ENCODE measurements at regions of chr7 and their contacts with region 1.

Region 1: GRCh38 chr7:117127585-117128168 is 174.4 kb downstream of the ST7 start:
- DNase-seq: no peak
- H3K4me3 ChIP-seq: no peak overlapping the region
- CTCF ChIP-seq: peak; percentile 52

Region 2: DNA sequence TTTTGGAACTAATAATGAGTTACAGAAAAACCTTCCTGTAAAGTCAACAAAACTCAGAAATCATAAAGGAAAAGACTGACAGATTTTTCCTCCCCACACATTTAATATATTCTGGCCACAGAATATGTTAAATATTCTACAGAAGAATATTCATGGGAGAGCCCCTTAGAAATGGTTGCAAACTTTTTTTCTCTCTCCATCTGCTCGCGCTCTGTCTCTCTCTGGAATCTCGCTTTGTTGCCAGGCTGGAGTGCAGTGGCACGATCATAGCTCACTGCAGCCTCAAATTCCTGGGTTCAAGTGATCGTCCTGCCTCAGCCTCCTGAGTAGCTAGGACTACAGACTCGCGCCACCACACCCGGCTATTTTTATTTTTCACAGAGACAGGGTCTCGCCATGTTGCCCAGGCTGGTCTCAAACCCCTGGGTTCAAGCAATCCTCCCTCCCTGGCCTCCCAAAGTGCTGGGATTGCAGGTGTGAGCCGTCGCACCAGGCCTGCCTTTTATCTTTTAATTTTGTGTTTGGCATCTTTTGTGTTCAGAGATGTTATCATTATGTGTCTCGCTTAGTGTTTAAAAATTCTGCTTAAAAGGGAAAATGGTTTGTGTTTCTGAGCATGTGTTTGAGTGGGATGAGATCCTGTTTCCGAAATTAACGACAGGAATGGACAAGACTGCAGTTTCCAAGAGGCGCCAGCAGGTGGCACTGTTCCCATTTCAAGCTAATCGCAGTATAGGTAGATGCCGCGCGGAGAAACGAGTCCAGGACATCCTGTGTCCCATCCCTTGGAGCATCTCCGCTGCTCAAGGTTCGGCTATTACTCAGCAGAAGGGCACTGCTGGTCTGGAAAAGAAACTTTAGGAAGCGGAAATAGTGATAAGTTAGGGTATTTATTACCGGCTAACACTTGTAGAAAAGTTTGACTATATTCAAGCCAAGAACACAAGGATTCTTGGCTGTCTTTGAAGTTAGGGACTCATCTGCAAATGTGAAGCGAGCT is 197.5 kb before region 1 on chr7:
- CTCF ChIA-PET with region 1: interaction called, 255 read pairs
- POLR2A ChIA-PET with region 1: no interaction called
- DNase-seq: no peak
- H3K4me3 ChIP-seq: no peak overlapping the region
- CTCF ChIP-seq: peak; percentile 79

Region 3: GRCh38 chr7:116999311-116999710 is 128.4 kb before region 1 on chr7:
- CTCF ChIA-PET with region 1: interaction called, 13 read pairs
- POLR2A ChIA-PET with region 1: no interaction called
- DNase-seq: no peak
- H3K4me3 ChIP-seq: no peak overlapping the region
- CTCF ChIP-seq: no peak

Region 4: DNA sequence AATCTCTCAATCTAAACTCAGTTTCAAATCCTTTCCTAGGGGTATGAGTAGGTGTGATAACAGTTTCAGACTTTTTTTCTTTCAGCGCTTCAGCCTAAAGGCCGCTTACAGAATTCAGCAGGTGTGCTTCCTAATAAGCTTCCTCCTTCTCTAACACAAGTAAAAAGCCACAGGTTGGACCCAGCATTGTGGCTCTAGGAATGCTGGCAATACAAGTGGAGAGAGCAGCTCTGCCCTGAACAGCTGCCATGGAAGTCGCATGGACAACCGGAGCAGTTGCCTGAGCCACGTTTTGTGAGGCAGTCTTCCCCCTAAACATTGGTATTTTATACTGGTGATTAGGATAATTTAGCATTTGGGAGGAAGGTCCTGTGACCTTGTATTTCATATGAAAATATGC is 90.8 kb before region 1 on chr7:
- CTCF ChIA-PET with region 1: interaction called, 11 read pairs
- POLR2A ChIA-PET with region 1: no interaction called
- DNase-seq: no peak
- H3K4me3 ChIP-seq: no peak overlapping the region
- CTCF ChIP-seq: no peak

Region 5: DNA sequence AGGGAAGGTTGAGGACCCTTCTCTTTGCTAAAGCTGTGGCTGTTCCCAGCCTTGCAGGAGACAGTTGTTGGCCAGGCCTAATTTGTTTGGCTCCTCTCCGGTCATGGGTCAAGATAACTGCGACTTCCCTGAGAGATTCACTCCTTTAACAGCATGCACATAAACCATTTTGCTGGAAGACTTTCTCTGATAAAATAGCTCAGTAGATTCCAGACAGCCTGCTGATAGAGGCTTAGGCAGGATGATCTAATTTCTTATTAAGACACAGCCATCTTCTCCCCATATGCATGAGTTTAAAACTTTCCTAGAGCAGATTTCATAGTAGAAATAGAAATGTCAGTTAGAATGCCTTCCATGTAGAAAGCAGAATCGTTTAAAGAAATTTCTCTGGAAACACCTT is 13.2 kb after region 1 on chr7:
- CTCF ChIA-PET with region 1: interaction called, 29 read pairs
- POLR2A ChIA-PET with region 1: no interaction called
- DNase-seq: no peak
- H3K4me3 ChIP-seq: no peak overlapping the region
- CTCF ChIP-seq: no peak

Measured in AG04449 (cell line).